CD8-positive, alpha-beta T cell (primary cell): ENCODE measurements at regions of chr6 and their contacts with region 1.

Region 1: GRCh38 chr6:42043787-42044475 is 6.4 kb upstream of the TAF8 start:
- DNase-seq: peak; percentile 82 to 97 (median 91)
- ATAC-seq: peak; percentile 30
- H3K4me3 ChIP-seq: peak overlapping the region; percentile 42 to 57
- H3K4me3 Mint-ChIP-seq: peak overlapping the region; percentile 81
- H3K27ac ChIP-seq: peak overlapping the region; percentile 41 to 55
- H3K27ac Mint-ChIP-seq: peak overlapping the region; percentile 95
- H3K4me1 ChIP-seq: peaks cover 65% of the 10 kb centered on the region
- H3K4me1 Mint-ChIP-seq: peaks cover 78% of the 10 kb centered on the region
- H3K27me3 ChIP-seq: no peaks in the 10 kb centered on the region
- H3K27me3 Mint-ChIP-seq: no peaks in the 10 kb centered on the region
- CTCF ChIP-seq: peak; percentile 84

Region 2: DNA sequence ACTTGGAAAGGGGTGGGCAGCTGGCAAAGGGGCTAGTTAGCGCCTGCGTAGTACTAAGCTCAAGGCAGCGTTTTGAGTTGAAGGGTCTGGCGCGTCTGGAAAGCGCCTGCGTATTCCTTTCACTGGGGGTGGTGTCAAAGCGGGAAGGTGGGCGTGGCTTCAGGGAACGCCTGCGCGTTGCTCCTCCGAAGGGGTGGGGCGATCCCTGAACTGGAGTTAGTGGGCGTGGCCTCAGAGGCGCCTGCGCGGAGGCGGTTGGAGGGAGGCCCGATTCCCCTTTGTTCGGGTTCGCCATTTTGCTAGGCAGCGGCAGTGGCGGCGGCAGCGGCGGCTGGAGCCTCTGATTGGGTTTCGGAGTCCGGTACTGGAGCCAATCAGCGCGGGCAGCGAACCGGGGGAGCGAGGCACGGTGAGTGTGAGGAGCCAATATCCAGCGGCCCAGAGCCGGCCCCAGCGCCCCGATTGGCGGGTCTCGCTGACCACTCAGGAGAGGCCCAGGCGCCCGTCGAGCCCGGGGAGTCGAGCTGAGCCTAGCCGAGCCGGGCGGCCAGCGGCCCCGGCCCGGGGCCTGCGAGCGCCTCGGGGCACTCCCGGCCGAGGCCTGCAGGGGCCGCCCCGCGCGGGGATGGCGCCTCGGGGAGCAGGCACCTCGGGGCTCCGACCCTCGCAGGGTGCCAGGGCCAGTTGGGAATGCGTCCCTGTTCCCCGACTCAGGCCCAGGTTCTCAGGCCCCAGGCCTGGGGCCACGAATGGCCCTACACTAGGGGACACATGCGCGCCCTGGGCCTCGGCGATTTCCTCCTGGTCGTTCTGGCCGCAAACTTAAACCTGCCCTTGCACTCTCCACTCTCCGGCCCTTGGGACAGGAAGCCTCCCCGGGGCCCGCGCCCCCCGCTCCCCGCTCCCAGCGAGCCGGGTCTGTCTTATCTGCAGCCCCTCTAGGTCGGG is 971.0 kb before region 1 on chr6 and contains the start of gene NFYA:
- CTCF ChIA-PET with region 1: no interaction called
- POLR2A ChIA-PET with region 1: no interaction called
- intact Hi-C with region 1: loop called (anchors 5 to 10 kb)
- DNase-seq: peak; percentile 99 to 100 (median 100)
- ATAC-seq: peak; percentile 70
- H3K4me3 ChIP-seq: peak within 1 kb of the TSS; percentile 72 to 86
- H3K4me3 Mint-ChIP-seq: peak within 1 kb of the TSS; percentile 92
- H3K27ac ChIP-seq: peak within 1 kb of the TSS; percentile 88 to 89
- H3K27ac Mint-ChIP-seq: peak within 1 kb of the TSS; percentile 95
- H3K4me1 ChIP-seq: peaks cover 37% of the 10 kb centered on the region
- H3K4me1 Mint-ChIP-seq: peaks cover 55% of the 10 kb centered on the region
- H3K27me3 ChIP-seq: no peaks in the 10 kb centered on the region
- H3K27me3 Mint-ChIP-seq: no peaks in the 10 kb centered on the region
- CTCF ChIP-seq: peak; percentile 46
- total RNA-seq, gene NFYA: 31.7 to 32.7 TPM

Region 3: GRCh38 chr6:41836022-41836659 is 207.8 kb before region 1 on chr6:
- CTCF ChIA-PET with region 1: no interaction called
- POLR2A ChIA-PET with region 1: no interaction called
- intact Hi-C with region 1: no loop called
- DNase-seq: peak in 1 of 9 experiments; percentile 12
- ATAC-seq: no peak
- H3K4me3 ChIP-seq: no peak overlapping the region
- H3K4me3 Mint-ChIP-seq: no peak overlapping the region
- H3K27ac ChIP-seq: no peak overlapping the region
- H3K27ac Mint-ChIP-seq: no peak overlapping the region
- H3K4me1 ChIP-seq: no peaks in the 10 kb centered on the region
- H3K4me1 Mint-ChIP-seq: peaks cover 6% of the 10 kb centered on the region
- H3K27me3 ChIP-seq: no peaks in the 10 kb centered on the region
- H3K27me3 Mint-ChIP-seq: no peaks in the 10 kb centered on the region
- CTCF ChIP-seq: no peak

Region 4: DNA sequence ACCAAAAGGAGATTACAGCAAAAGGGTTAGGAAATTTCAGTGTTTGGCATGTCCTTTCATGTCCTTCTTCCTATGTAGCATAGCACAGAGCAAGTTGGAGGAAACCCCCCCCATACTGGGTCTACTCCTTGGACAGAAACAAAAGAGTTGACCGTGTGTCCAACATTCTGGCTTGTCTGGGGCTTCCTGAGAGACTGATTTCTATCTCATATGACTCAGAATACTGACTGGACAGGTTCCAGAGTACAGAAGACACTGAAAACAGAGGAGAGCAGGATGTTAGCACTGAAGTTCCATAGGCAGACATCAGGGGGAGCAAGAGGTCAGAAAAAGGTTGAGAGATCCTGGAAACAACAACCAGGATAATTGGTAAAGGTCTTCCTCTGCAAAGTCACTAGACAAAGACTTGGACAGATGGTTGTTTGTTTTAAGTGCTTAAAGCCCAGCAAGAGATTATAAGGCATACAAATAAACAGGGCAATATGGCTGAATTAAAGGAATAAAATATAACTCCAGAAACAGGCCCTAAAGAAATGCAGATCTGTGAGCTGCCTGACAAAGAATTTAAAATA is 197.2 kb before region 1 on chr6:
- CTCF ChIA-PET with region 1: interaction called, 84 read pairs
- POLR2A ChIA-PET with region 1: interaction called, 3 read pairs
- intact Hi-C with region 1: loop called (anchors 1 kb)
- DNase-seq: peak; percentile 16 to 74 (median 53)
- ATAC-seq: peak; percentile 81
- H3K4me3 ChIP-seq: no peak overlapping the region
- H3K4me3 Mint-ChIP-seq: no peak overlapping the region
- H3K27ac ChIP-seq: no peak overlapping the region
- H3K27ac Mint-ChIP-seq: no peak overlapping the region
- H3K4me1 ChIP-seq: no peaks in the 10 kb centered on the region
- H3K4me1 Mint-ChIP-seq: peaks cover 3% of the 10 kb centered on the region
- H3K27me3 ChIP-seq: no peaks in the 10 kb centered on the region
- H3K27me3 Mint-ChIP-seq: no peaks in the 10 kb centered on the region
- CTCF ChIP-seq: peak; percentile 77

Region 5: DNA sequence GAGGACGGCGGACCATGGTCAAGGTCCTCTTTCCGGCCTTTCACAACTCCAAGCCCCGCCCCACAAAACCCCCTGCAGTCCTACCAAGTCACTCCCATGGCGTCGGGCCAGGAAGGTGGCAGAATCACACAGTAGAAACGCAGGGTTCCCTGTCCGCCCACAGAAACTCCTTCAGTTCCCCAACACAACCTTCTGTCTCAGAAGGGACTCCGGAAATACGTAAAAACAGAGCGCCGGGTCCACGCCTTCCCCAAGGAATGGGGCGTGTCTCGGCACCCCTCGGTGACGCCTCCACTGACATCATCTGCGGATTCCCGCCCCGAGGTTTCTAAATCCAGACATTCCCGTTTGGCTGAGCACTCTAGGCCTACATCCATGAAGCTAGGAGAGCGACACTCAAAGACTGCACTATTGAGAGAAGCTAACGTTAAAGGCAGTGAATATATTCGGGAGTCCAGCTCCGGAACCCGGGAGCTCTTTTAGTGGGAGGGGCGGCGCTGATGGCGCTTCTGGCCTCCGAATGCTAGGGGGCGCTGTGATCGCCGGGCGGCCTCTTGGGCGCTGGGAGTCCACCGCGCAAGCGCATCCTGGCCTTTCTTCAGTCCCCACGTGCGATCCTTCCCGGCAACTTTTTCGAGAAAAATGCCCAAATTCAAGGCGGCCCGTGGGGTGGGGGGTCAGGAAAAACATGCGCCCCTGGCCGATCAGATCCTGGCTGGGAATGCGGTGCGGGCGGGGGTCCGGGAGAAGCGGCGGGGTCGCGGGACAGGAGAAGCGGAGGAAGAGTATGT is 122.8 kb before region 1 on chr6 and contains the starts of genes BYSL and MED20:
- CTCF ChIA-PET with region 1: interaction called, 44 read pairs
- POLR2A ChIA-PET with region 1: interaction called, 17 read pairs
- intact Hi-C with region 1: loop called (anchors 1 kb)
- DNase-seq: peak; percentile 86 to 98 (median 94)
- ATAC-seq: peak; percentile 92
- H3K4me3 ChIP-seq: peak within 1 kb of the TSS; percentile 96 to 97
- H3K4me3 Mint-ChIP-seq: peak within 1 kb of the TSS; percentile 100
- H3K27ac ChIP-seq: peak within 1 kb of the TSS; percentile 83 to 99
- H3K27ac Mint-ChIP-seq: peak within 1 kb of the TSS; percentile 100
- H3K4me1 ChIP-seq: peaks cover 32% of the 10 kb centered on the region
- H3K4me1 Mint-ChIP-seq: peaks cover 53% of the 10 kb centered on the region
- H3K27me3 ChIP-seq: no peaks in the 10 kb centered on the region
- H3K27me3 Mint-ChIP-seq: no peaks in the 10 kb centered on the region
- CTCF ChIP-seq: peak; percentile 97
- total RNA-seq, gene BYSL: 3.2 to 6.2 TPM
- total RNA-seq, gene MED20: 1.8 TPM

Region 6: DNA sequence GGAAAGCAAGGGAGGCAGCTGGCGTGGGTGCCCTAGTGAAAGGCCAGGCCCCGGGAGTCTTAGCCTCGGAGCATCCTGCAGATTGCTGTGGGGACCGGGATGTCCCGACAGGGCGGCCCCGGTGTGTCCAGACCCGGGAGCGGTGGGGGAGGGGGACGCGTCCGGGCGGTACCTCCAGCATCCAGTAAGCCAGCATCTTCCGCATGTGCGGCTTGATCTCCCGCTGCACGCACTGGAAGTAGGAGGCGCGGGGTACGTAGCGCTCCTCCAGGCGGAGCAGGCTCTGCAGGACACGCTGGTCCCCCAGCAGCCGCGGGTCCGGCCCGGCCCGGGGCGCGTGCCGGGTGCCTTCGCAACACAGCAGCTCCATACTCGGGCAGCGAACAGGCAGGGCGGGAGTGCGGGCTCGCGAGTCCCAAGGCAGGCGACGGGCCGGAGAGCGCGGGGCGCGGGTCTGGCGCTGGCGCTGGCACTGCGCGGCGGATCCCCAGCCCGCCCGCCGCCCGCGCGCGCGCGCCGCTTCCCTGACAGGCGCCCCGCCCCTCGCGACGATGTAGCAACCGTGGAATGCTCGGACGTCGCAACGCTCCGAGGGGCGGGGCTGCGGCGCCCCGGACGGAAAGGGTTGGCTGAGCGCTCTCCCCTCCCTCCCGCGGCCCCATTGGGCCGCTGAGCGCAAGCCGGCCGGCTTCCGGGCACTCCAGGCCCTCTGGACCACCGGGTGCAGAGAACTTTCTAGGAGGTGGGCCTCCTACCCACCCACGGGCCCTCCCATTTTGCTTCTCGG is 102.5 kb before region 1 on chr6 and contains the start of gene CCND3:
- CTCF ChIA-PET with region 1: interaction called, 184 read pairs
- POLR2A ChIA-PET with region 1: interaction called, 58 read pairs
- intact Hi-C with region 1: loop called (anchors 1 kb)
- DNase-seq: peak; percentile 53 to 92 (median 82)
- ATAC-seq: peak; percentile 63
- H3K4me3 ChIP-seq: peak within 1 kb of the TSS; percentile 51 to 97
- H3K4me3 Mint-ChIP-seq: peak within 1 kb of the TSS; percentile 84
- H3K27ac ChIP-seq: peak within 1 kb of the TSS; percentile 50 to 63
- H3K27ac Mint-ChIP-seq: peak within 1 kb of the TSS; percentile 89
- H3K4me1 ChIP-seq: peaks cover 64% of the 10 kb centered on the region
- H3K4me1 Mint-ChIP-seq: peaks cover 65% of the 10 kb centered on the region
- H3K27me3 ChIP-seq: no peaks in the 10 kb centered on the region
- H3K27me3 Mint-ChIP-seq: no peaks in the 10 kb centered on the region
- CTCF ChIP-seq: no peak
- total RNA-seq, gene CCND3: 129 to 135 TPM

Region 7: GRCh38 chr6:42028234-42029061 is 15.5 kb before region 1 on chr6:
- CTCF ChIA-PET with region 1: interaction called, 64 read pairs
- POLR2A ChIA-PET with region 1: interaction called, 17 read pairs
- intact Hi-C with region 1: no loop called
- DNase-seq: peak in 1 of 9 experiments; percentile 41
- ATAC-seq: peak; percentile 7
- H3K4me3 ChIP-seq: peak overlapping the region in 1 of 2 experiments; percentile 10
- H3K4me3 Mint-ChIP-seq: peak overlapping the region; percentile 71
- H3K27ac ChIP-seq: peak overlapping the region in 1 of 2 experiments; percentile 66
- H3K27ac Mint-ChIP-seq: peak overlapping the region; percentile 99
- H3K4me1 ChIP-seq: peaks cover 96% of the 10 kb centered on the region
- H3K4me1 Mint-ChIP-seq: peaks cover 90% of the 10 kb centered on the region
- H3K27me3 ChIP-seq: no peaks in the 10 kb centered on the region
- H3K27me3 Mint-ChIP-seq: no peaks in the 10 kb centered on the region
- CTCF ChIP-seq: no peak

Region 8: DNA sequence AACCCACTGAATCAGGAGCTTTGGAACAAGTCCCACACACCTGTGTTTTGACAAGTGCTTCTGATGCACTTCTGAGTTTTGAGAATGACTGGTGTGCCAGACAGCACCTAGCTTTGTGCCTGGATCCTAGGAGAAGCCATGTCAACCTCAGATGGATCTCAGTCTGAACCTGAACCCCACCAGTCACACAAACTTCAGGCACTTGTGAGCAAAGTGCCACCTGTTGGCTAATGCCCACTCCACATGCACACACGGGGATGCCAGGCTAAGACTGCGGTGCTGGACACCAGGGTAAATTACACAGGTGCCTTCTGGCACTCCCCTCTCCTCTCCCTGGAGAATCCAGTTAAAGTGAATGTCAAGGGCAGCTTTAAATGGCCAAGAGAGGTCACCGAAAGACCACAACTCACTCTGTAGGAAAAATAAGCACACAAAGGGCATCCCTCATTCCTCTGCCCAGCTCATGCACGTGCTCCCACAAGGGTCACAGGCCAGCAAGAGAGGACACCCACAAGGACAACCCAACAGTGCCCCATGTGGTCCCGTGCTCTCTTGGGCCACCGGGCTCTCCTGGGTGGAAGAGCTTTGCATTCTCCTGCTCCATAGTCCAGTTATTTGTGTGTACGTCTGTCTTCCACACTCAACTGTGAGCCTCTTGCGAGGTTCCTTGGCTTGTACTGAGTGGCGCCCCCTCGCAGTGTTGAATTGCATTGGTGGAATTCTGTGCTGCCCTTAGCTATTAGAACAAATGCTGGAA is 52.0 kb after region 1 on chr6:
- CTCF ChIA-PET with region 1: no interaction called
- POLR2A ChIA-PET with region 1: no interaction called
- intact Hi-C with region 1: no loop called
- DNase-seq: no peak
- ATAC-seq: no peak
- H3K4me3 ChIP-seq: no peak overlapping the region
- H3K4me3 Mint-ChIP-seq: no peak overlapping the region
- H3K27ac ChIP-seq: no peak overlapping the region
- H3K27ac Mint-ChIP-seq: no peak overlapping the region
- H3K4me1 ChIP-seq: no peaks in the 10 kb centered on the region
- H3K4me1 Mint-ChIP-seq: no peaks in the 10 kb centered on the region
- H3K27me3 ChIP-seq: no peaks in the 10 kb centered on the region
- H3K27me3 Mint-ChIP-seq: no peaks in the 10 kb centered on the region
- CTCF ChIP-seq: no peak

Region 9: GRCh38 chr6:43174263-43175112 is 1130.6 kb after region 1 on chr6:
- CTCF ChIA-PET with region 1: no interaction called
- POLR2A ChIA-PET with region 1: no interaction called
- intact Hi-C with region 1: loop called in 1 of 2 experiments (anchors 5 kb)
- DNase-seq: peak; percentile 77 to 98 (median 92)
- ATAC-seq: peak; percentile 52
- H3K4me3 ChIP-seq: peak overlapping the region; percentile 4 to 50
- H3K4me3 Mint-ChIP-seq: peak overlapping the region; percentile 63
- H3K27ac ChIP-seq: peak overlapping the region; percentile 62 to 89
- H3K27ac Mint-ChIP-seq: peak overlapping the region; percentile 95
- H3K4me1 ChIP-seq: peaks cover 40% of the 10 kb centered on the region
- H3K4me1 Mint-ChIP-seq: peaks cover 45% of the 10 kb centered on the region
- H3K27me3 ChIP-seq: no peaks in the 10 kb centered on the region
- H3K27me3 Mint-ChIP-seq: no peaks in the 10 kb centered on the region
- CTCF ChIP-seq: no peak